ENCODE measurements at regions of chr3 and their contacts with region 1.

Region 1: GRCh38 chr3:120558771-120559241 is 37.3 kb upstream of the NDUFB4 start:
- DNase-seq: peak; percentile 96
- H3K4me3 ChIP-seq: peak overlapping the region; percentile 39 to 54 (median 49)
- H3K27ac ChIP-seq: peak overlapping the region; percentile 81 to 92 (median 86)
- H3K4me1 ChIP-seq: peaks cover 0 to 59% (median 48%) of the 10 kb centered on the region in 4 donors
- H3K27me3 ChIP-seq: no peaks in the 10 kb centered on the region
- CTCF ChIP-seq: peak; percentile 98 to 100 (median 99)
- EP300 ChIP-seq: no peak
- POLR2A ChIP-seq: no peak

Region 2: DNA sequence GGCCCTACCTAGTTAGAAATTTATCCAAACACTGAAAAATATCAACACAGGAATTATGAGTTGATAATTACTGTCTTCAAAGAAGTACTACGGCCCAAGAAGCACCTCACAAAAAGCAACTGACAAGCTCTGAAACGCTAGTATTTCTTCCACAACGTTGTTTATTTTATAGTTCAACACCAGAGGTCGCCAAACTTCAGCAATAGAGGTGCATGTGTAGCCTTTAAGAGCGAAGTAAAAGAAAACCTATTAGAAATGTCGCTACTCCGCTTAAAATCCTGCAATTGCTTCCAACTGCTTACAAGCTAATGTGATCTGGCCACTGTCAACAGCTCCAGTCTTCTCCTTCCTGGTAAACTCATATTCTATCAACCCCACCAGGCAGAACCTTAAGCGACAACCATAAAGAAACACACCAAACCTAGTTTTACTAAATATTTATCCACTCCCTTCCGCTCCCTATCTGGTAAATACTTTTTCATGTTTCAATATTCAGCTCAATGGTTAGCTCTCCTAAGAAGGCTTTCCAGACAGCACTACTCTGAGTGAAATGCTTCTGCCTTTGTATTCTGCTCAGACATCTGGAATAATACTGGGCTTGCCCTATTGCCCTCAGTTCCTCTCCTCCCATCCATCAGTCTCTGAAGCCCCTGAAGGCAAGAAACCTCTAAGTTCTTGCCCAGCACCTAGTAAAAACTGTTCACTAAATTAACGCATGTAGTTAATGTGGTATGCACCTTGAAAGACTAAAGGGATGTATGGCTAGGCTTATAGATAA is 666.7 kb before region 1 on chr3:
- intact Hi-C with region 1: loop called (anchors 5 kb)
- DNase-seq: no peak
- H3K4me3 ChIP-seq: peak overlapping the region in 2 of 4 donors; percentile 10 to 18
- H3K27ac ChIP-seq: peak overlapping the region in 3 of 4 donors; percentile 34 to 55 (median 36)
- H3K4me1 ChIP-seq: peaks cover 0 to 11% (median 0%) of the 10 kb centered on the region in 4 donors
- H3K27me3 ChIP-seq: no peaks in the 10 kb centered on the region
- CTCF ChIP-seq: peak; percentile 58 to 69 (median 58)
- EP300 ChIP-seq: no peak
- POLR2A ChIP-seq: no peak

Region 3: DNA sequence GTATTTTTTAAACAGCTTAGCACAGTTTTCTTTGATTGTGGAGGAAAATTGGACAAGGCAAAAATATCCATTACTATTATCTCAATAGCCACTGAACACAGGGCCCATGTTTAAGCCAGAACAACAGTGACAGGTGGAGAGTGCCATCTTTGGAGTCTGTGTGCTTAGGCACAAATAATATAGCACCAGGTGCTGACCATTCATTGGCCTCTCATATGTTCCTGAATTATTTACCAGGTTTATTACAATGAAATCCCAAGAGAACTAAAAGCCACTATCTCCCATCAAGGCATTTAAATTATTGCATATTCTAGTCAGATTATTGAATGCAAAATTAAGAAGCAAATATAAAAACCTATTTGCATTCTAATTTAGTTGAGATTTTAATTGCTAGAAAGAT is 313.4 kb before region 1 on chr3:
- intact Hi-C with region 1: loop called (anchors 2 kb)
- DNase-seq: no peak
- H3K4me3 ChIP-seq: no peak overlapping the region
- H3K27ac ChIP-seq: no peak overlapping the region
- H3K4me1 ChIP-seq: peaks cover 0 to 5% (median 2%) of the 10 kb centered on the region in 4 donors
- H3K27me3 ChIP-seq: no peaks in the 10 kb centered on the region
- CTCF ChIP-seq: no peak
- EP300 ChIP-seq: no peak
- POLR2A ChIP-seq: no peak

Region 4: GRCh38 chr3:120417272-120417911 is 141.4 kb before region 1 on chr3:
- intact Hi-C with region 1: loop called (anchors 1 kb)
- DNase-seq: peak; percentile 96
- H3K4me3 ChIP-seq: peak overlapping the region in 3 of 4 donors; percentile 8 to 33 (median 29)
- H3K27ac ChIP-seq: peak overlapping the region; percentile 79 to 96 (median 85)
- H3K4me1 ChIP-seq: peaks cover 0 to 70% (median 65%) of the 10 kb centered on the region in 4 donors
- H3K27me3 ChIP-seq: no peaks in the 10 kb centered on the region
- CTCF ChIP-seq: peak; percentile 78 to 93 (median 86)
- EP300 ChIP-seq: no peak
- POLR2A ChIP-seq: no peak

Region 5: GRCh38 chr3:120506828-120507774 is 51.7 kb before region 1 on chr3:
- intact Hi-C with region 1: loop called (anchors 5 kb)
- DNase-seq: peak; percentile 68
- H3K4me3 ChIP-seq: no peak overlapping the region
- H3K27ac ChIP-seq: peak overlapping the region in 2 of 4 donors; percentile 1 to 48
- H3K4me1 ChIP-seq: peaks cover 0 to 27% (median 19%) of the 10 kb centered on the region in 4 donors
- H3K27me3 ChIP-seq: no peaks in the 10 kb centered on the region
- CTCF ChIP-seq: peak; percentile 15 to 70 (median 58)
- EP300 ChIP-seq: no peak
- POLR2A ChIP-seq: no peak

Region 6: DNA sequence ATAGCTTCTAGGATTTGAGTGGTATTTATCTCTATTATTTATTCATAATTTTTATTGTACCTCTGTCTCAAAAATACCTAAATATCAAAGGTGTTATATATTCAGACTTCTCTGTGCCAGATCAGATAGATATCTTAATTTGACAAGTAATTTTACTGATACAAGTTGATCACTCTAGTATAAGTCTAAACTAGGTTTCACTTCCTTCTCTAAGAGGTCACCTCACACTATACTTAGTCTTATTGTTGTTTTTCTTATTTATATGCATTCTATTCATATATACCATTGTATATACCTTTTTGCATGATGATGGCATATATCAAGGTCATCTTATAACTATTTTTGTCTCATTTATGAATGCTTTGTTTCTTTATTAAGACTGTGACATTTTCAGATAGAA is 149.6 kb after region 1 on chr3:
- intact Hi-C with region 1: no loop called
- DNase-seq: no peak
- H3K4me3 ChIP-seq: no peak overlapping the region
- H3K27ac ChIP-seq: no peak overlapping the region
- H3K4me1 ChIP-seq: no peaks in the 10 kb centered on the region
- H3K27me3 ChIP-seq: no peaks in the 10 kb centered on the region
- CTCF ChIP-seq: no peak
- EP300 ChIP-seq: no peak
- POLR2A ChIP-seq: no peak

Region 7: DNA sequence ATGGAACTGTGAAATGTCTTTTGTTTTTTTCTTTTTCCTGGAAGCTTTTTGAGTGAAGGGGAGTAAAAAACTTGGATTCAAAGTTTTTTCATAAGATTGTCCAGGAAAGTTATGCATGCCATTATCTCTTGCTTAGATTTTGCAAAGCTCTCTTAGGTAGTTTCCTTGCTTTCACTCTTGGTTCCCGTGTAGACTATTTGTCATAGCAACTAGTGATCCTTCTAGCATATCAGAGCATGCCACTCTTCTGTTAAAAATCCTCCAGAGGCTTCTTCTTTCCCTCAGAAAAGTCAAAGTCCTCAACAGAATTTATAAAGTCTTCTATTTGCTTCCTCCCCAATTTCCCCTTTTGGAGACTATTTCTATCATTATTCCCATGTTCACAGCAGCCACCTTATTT is 204.8 kb after region 1 on chr3:
- intact Hi-C with region 1: no loop called
- DNase-seq: no peak
- H3K4me3 ChIP-seq: no peak overlapping the region
- H3K27ac ChIP-seq: no peak overlapping the region
- H3K4me1 ChIP-seq: peaks cover 0 to 28% (median 24%) of the 10 kb centered on the region in 4 donors
- H3K27me3 ChIP-seq: no peaks in the 10 kb centered on the region
- CTCF ChIP-seq: no peak
- EP300 ChIP-seq: no peak
- POLR2A ChIP-seq: no peak

Region 8: GRCh38 chr3:120795017-120795648 is 236.3 kb after region 1 on chr3:
- intact Hi-C with region 1: loop called (anchors 2 kb)
- DNase-seq: peak; percentile 80
- H3K4me3 ChIP-seq: no peak overlapping the region
- H3K27ac ChIP-seq: no peak overlapping the region
- H3K4me1 ChIP-seq: no peaks in the 10 kb centered on the region
- H3K27me3 ChIP-seq: no peaks in the 10 kb centered on the region
- CTCF ChIP-seq: peak; percentile 42 to 63 (median 54)
- EP300 ChIP-seq: no peak
- POLR2A ChIP-seq: no peak

Measured in sigmoid colon (tissue), 7 donors.